Activated naive CD4-positive, alpha-beta T cell treated with anti-CD3 and anti-CD28 coated beads for 36 hours (primary cell): ENCODE measurements at regions of chr6 and their contacts with region 1.

Region 1: DNA sequence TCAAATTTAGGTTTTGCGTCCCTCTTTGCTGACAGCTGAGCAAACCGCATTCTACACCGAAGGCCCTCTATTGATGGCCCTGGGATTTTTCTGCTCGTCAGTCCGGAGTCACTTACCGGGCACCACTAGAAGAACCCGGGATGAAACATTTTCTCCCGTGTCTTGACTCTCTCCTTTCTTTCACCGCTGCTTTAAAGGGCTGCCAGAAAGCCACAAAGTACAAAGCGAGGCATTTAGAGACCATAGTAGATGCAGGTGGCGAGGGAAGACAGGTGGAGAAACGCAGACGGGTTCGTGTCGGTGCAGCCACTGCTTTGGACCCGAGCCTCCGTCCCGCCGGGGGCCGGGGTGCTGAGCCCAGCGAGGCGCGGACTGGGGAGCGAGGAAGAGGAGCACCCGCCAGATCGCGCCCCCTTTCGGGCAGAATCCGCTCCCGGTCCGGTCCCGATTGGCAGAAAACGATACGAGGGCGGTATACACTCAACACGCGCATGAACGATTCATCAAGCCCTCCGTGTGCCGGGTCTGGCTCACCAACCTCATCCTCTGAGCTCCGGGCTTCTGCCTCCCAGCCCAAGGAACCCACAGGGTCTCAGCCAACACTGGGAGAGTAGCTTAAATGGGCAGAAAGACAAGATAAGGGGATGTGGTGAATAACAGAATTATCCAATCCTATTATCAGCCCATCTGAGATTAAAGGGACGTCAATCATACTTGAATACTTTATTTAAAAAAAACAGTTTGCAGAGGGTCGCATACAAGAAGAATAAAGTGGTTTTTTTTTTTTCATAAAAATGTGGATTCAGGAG is 84.9 kb downstream of the TRIM27 start:
- DNase-seq: peak; percentile 91
- H3K4me3 Mint-ChIP-seq: peak overlapping the region; percentile 95
- H3K27ac Mint-ChIP-seq: peak overlapping the region; percentile 86
- H3K4me1 Mint-ChIP-seq: peaks cover 9% of the 10 kb centered on the region
- H3K27me3 Mint-ChIP-seq: peaks cover 21% of the 10 kb centered on the region

Region 2: DNA sequence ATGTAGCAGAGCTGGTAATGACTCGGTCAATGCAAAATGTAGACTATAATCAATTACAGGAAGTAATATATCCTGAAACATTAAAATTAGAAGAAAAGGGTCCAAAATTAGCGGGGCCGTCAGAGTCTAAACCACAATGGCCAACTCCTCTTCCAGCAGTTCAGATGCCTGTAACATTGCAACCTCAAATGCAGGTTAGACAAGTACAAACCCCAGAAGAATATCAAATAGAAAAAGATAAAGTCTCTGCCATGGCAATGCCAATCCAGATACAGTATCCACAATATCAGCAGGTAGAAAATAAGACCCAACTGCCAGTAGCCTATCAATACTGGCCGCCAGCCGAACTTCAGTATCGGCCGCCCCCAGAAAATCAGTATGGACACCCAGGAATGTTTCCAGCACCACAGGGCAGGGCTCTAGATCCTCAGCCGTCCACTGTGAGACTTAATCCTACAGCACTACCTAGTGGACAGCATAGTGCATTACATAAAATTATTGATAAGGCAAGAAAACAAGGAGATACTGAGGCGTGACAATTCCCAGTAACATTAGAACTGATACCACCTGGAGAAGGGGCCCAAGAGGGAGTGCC is 154.8 kb before region 1 on chr6:
- CTCF ChIA-PET with region 1: interaction called, 8 read pairs
- intact Hi-C with region 1: loop called (anchors 1 kb)
- DNase-seq: no peak
- H3K4me3 Mint-ChIP-seq: no peak overlapping the region
- H3K27ac Mint-ChIP-seq: no peak overlapping the region
- H3K4me1 Mint-ChIP-seq: peaks cover 5% of the 10 kb centered on the region
- H3K27me3 Mint-ChIP-seq: peaks cover 73% of the 10 kb centered on the region

Region 3: GRCh38 chr6:28801111-28801510 is 37.7 kb before region 1 on chr6:
- CTCF ChIA-PET with region 1: no interaction called
- intact Hi-C with region 1: no loop called
- DNase-seq: no peak
- H3K4me3 Mint-ChIP-seq: no peak overlapping the region
- H3K27ac Mint-ChIP-seq: no peak overlapping the region
- H3K4me1 Mint-ChIP-seq: no peaks in the 10 kb centered on the region
- H3K27me3 Mint-ChIP-seq: peaks cover 68% of the 10 kb centered on the region

Region 4: GRCh38 chr6:28880894-28881780 is 42.3 kb after region 1 on chr6:
- CTCF ChIA-PET with region 1: interaction called, 4 read pairs
- intact Hi-C with region 1: loop called (anchors 1 kb)
- DNase-seq: peak; percentile 86
- H3K4me3 Mint-ChIP-seq: peak overlapping the region; percentile 76
- H3K27ac Mint-ChIP-seq: peak overlapping the region; percentile 83
- H3K4me1 Mint-ChIP-seq: peaks cover 36% of the 10 kb centered on the region
- H3K27me3 Mint-ChIP-seq: peaks cover 5% of the 10 kb centered on the region

Region 5: DNA sequence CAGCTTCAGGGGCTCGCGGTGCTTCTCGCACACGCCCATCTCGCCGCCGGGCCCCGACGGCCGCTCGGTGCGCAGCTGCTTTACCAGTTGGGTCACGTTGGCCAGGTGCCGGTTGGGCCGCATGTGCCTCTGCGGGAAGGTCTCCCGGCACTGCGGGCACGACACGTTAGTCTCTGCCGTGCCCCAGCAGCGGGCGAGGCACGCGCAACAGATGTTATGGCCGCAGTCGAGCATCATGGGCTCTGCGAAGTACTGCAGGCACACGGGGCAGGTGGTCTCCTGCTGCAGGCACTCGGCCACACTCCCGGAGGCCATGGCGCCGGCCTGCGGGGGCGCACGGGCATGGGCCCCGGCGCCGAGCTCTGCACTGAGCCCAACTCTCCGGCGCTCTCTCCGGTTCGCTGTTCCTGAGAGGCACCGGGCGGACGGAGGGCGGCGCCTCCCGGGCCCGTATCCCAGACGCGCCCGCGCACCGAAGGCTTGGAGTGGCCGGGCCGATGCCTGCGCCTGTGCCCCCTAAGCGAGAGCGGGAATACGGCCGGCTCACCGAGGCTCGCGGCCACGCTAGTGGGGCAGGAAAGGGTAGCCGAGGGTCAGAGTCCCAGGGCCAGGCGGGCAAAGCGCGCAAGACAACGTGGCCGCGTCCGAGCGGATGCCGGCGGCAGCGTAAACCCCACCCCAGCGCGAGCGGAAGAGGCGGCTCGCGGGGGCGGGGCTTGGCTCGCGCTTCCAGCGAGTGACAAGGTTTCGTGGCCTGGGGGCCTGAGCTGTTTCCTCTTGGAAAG is 84.7 kb after region 1 on chr6 and contains the start of gene TRIM27:
- CTCF ChIA-PET with region 1: interaction called, 12 read pairs
- intact Hi-C with region 1: loop called (anchors 1 kb)
- DNase-seq: peak; percentile 77
- H3K4me3 Mint-ChIP-seq: peak within 1 kb of the TSS; percentile 93
- H3K27ac Mint-ChIP-seq: peak within 1 kb of the TSS; percentile 95
- H3K4me1 Mint-ChIP-seq: peaks cover 39% of the 10 kb centered on the region
- H3K27me3 Mint-ChIP-seq: no peaks in the 10 kb centered on the region
- total RNA-seq, gene TRIM27: 35.8 to 41.4 TPM

Region 6: DNA sequence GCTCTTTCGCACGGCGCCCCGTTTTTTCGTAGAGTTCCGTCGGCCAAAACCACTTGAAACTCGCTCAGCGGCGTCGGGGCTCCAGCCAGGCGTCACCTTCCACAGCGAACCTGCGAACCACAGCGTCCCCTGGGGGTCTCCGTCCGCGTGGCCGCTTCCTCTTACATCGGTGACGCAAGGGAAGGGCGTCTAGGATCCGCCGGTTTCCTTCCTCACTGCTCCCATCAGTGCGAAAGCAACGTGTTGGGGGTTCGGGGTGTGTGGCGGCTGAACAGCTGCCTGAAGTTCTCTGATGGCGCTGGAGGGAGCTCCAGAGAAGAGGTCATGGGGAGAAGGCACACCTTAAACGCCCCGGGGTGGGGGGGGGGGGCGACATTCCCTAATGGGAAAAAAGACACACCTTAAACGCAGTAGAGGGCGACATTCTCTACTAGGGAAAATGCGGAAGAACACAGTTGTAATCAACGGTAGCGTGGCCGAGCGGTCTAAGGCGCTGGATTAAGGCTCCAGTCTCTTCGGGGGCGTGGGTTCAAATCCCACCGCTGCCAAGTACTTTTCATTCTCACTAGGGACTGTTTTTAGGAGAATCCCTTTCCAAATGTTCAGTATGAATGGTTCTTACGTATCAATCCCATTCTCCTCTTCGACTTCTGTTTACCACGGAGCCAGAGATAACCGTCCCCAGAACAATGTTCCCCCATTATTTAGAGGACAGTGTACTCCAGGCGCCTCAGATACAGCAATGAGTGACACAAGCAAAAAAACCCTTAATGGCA is 149.9 kb after region 1 on chr6:
- CTCF ChIA-PET with region 1: interaction called, 13 read pairs
- intact Hi-C with region 1: loop called (anchors 1 kb)
- DNase-seq: peak; percentile 83
- H3K4me3 Mint-ChIP-seq: peak overlapping the region; percentile 83
- H3K27ac Mint-ChIP-seq: peak overlapping the region; percentile 50
- H3K4me1 Mint-ChIP-seq: peaks cover 21% of the 10 kb centered on the region
- H3K27me3 Mint-ChIP-seq: peaks cover 18% of the 10 kb centered on the region

Region 7: DNA sequence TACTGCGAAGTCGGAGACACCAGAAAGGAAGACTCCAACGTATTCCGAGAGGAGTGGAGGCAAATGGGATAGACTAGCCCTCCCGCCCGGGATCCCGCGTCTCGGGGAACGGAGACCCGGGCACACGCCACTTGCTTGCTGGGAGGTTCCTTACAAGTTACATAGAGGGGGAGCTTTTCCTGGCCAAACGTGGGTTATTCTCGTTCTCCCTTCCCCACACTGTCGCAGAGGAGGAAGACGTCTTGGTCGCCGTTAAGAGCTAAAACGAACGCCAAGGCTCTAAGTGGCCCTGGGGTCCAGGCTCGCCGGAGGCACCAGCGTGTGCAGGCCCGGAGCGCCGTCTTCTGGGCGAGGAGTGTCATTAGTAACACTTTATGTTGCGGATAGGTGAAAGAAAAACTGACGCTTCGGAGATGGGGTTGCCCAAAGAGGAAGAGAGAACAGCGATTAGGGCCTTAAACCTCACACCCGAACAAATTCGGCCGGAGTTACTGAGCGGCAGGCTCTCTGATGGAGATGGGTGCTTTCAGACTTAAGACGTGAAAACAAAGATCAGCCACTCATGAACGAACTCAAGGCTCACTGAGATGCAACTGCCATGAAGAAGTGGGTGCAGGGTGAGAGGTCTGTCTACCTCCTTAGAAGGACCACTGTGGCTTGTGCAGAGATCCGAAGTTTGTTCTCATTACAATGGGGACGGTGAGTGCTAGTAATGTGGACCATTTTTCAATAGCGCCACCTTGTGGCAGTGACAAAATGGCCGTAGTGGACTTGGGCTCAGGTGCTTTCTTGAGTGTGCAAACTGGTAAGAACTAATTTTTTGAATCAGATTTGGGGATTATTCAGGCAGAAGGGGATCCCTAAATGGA is 178.0 kb after region 1 on chr6:
- CTCF ChIA-PET with region 1: interaction called, 72 read pairs
- intact Hi-C with region 1: loop called (anchors 1 kb)
- DNase-seq: peak; percentile 92
- H3K4me3 Mint-ChIP-seq: peak overlapping the region; percentile 90
- H3K27ac Mint-ChIP-seq: peak overlapping the region; percentile 84
- H3K4me1 Mint-ChIP-seq: peaks cover 12% of the 10 kb centered on the region
- H3K27me3 Mint-ChIP-seq: peaks cover 9% of the 10 kb centered on the region

Region 8: DNA sequence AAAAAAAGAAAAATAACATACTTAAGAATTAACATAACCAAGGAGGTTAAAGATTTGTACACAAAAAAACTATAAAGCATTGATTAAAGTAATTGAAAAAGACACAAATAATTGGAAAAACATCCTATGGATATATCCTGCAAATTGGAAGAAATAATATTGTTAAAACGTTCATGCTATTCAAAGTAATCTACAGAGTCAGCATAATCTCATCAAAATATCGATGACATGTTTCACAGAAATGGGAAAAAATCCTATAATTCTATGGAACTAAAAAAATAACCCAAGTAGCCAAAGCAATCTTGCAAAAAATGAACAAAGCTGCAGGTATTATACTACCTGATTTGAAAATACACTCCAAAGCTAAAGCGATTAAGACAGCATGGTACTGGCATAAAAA is 506.5 kb after region 1 on chr6:
- CTCF ChIA-PET with region 1: no interaction called
- intact Hi-C with region 1: no loop called
- DNase-seq: no peak
- H3K4me3 Mint-ChIP-seq: no peak overlapping the region
- H3K27ac Mint-ChIP-seq: no peak overlapping the region
- H3K4me1 Mint-ChIP-seq: no peaks in the 10 kb centered on the region
- H3K27me3 Mint-ChIP-seq: peaks cover 3% of the 10 kb centered on the region

Region 9: DNA sequence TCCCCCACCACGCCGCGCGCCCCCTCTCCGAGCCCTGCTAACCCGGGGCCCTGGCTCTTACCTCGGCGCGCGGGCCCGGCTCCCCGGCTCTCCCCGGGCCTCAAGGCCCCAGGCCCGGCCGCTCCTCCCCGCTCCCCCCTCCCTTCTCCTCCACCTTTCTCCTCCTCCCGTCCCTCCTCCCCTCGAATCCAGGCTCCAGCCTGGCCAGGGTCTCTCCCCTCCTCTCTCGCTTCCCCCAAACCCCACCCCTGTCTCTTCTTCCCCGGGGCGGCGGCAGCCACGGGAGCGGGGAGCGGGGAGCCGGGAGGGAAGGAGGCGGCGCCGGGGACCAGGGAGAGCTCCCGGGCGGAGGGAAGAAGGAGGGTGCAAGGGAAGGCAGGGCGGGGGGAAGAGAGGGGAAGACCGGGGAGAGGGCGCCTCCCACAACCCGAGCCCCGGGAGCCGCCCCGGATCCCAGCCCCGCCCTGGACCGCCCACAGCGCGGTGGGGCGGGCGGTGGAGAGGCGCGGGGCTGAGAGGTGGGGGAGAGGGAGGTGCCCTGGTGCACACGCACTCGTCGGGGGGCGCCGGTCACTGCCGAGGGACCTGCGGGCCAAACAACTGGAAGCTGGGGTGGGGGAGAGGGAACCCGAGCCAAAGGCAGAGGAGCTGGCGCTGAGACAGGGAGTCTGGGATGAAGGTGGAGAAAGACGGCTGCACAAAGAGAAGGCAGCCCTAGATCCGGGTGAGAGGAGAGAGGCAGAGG is 794.1 kb after region 1 on chr6 and contains the start of gene GABBR1:
- CTCF ChIA-PET with region 1: no interaction called
- intact Hi-C with region 1: loop called (anchors 5 kb)
- DNase-seq: peak; percentile 77
- H3K4me3 Mint-ChIP-seq: peak within 1 kb of the TSS; percentile 74
- H3K27ac Mint-ChIP-seq: no peak within 1 kb of the TSS
- H3K4me1 Mint-ChIP-seq: peaks cover 38% of the 10 kb centered on the region
- H3K27me3 Mint-ChIP-seq: no peaks in the 10 kb centered on the region
- total RNA-seq, gene GABBR1: 8.0 to 11.2 TPM